ENCODE measurements at regions of chr19 and their contacts with region 1.

Region 1: DNA sequence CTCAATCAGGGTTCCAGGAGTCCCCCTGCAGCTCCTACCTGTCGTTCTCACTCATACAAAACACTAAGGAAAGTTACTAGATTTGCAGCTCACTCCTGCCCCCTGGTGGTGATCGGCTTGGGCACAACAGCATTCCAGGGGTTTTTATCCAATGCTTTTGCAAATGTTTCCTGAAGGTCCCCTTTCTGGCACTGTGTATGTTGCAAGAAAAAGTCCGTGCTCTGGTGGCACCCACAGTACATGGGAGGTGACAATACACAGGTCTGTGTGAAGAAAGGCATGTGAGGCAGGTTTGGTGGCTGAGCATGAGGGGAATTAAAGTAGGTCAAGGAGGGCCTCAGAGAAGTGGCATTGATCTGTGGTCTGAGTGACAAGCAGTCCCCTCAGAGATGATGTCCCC is 8.6 kb upstream of the TYK2 start:
- DNase-seq: peak; percentile 69 to 96 (median 91)

Region 2: DNA sequence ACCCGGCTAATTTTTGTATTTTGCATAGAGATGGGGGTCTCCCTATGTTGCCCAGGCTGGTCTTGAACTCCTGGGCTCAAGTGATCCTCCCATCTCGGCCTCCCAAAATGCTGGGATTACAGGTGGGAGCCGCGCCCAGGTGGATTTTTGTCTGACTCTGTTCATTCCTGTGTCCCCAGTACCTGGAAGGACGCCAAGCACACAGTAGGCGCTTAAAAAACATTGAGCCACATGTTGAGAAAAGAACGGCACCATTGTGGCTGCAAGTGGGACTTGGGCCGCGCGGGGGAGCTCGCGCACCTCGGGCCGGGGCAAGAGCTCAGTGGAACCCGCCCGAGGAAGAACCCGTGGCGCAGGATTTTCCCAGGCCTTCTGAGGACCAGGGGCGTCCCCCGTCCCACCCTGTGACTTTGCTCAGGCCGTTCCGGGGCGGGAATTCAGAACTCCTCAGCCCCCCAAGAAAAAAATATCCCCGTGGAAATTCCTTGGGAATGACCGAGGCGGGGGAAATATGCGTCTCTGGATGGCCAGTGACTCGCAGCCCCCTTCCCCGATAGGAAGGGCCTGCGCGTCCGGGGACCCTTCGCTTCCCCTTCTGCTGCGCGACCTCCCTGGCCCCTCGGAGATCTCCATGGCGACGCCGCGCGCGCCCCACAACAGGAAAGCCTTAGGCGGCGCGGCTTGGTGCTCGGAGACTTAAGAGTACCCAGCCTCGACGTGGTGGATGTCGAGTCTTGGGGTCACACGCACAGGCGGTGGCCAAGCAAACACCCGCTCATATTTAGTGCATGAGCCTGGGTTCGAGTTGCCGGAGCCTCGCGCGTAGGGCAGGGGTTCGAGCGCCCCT is 119.4 kb before region 1 on chr19:
- intact Hi-C with region 1: loop called (anchors 2 kb)
- DNase-seq: peak; percentile 64 to 93 (median 84)

Measured in head of caudate nucleus (tissue), 42 donors.